ENCODE measurements at regions of chr7 and their contacts with region 1.

Region 1: GRCh38 chr7:66557608-66558143 is 71.0 kb upstream of the KCTD7 start:
- DNase-seq: peak; percentile 60 to 73 (median 64)
- H3K4me3 ChIP-seq: no peak overlapping the region
- H3K4me3 Mint-ChIP-seq: no peak overlapping the region
- H3K27ac ChIP-seq: no peak overlapping the region
- H3K27ac Mint-ChIP-seq: peak overlapping the region in 3 of 7 donors; percentile 30 to 78 (median 57)
- H3K4me1 ChIP-seq: no peaks in the 10 kb centered on the region
- H3K4me1 Mint-ChIP-seq: peaks cover 5 to 18% (median 7%) of the 10 kb centered on the region in 4 donors
- H3K27me3 ChIP-seq: no peaks in the 10 kb centered on the region
- H3K27me3 Mint-ChIP-seq: no peaks in the 10 kb centered on the region

Region 2: DNA sequence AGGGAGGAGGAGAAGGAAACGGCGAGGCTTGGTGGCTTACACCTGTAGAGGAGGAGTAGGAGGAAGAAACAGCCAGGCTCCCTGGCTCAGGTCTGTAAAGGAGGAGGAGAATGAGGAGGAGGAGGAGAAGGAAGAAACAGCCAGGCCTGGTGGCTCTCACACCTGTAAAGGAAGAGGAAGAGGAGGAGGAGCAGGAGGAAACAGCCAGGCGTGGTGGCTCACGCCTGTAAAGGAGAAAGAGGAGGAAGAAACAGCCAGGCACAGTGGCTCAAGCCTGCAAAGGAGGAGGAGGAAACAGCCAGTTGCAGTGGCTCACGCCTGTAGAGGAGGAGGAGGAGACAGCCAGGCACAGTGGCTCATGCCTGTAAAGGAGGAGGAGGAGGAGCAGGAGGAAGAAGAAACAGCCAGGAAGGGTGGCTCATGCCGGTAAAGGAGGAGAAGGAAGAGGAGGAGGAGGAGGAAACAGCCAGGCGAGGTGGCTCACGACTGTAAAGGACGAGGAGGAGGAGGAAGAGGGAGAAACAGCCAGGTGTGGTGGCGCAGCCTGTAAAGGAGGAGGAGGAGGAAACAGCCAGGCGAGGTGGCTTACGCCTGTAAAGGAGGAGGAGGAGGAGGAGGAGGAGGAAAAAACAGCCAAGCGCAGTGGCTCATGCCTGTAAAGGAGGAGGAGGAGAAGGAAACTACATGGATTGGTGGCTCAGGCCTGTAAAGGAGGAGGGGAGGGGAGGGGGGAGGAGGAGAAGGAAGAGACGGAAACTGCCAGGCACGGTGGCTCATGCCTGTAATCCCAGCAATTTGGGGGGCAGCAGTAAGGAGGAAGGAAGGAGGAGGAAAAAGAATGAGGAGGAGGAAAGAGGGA is 457.8 kb before region 1 on chr7:
- CTCF ChIA-PET with region 1: no interaction called
- POLR2A ChIA-PET with region 1: no interaction called
- intact Hi-C with region 1: no loop called
- DNase-seq: peak in 4 of 5 donors; percentile 19 to 31 (median 28)
- H3K4me3 ChIP-seq: peak overlapping the region; percentile 18 to 78
- H3K4me3 Mint-ChIP-seq: peak overlapping the region; percentile 85 to 95 (median 90)
- H3K27ac ChIP-seq: peak overlapping the region; percentile 50
- H3K27ac Mint-ChIP-seq: peak overlapping the region; percentile 78 to 96 (median 92)
- H3K4me1 ChIP-seq: peaks cover 7% of the 10 kb centered on the region
- H3K4me1 Mint-ChIP-seq: peaks cover 7 to 12% (median 9%) of the 10 kb centered on the region in 4 donors
- H3K27me3 ChIP-seq: no peaks in the 10 kb centered on the region
- H3K27me3 Mint-ChIP-seq: no peaks in the 10 kb centered on the region

Region 3: DNA sequence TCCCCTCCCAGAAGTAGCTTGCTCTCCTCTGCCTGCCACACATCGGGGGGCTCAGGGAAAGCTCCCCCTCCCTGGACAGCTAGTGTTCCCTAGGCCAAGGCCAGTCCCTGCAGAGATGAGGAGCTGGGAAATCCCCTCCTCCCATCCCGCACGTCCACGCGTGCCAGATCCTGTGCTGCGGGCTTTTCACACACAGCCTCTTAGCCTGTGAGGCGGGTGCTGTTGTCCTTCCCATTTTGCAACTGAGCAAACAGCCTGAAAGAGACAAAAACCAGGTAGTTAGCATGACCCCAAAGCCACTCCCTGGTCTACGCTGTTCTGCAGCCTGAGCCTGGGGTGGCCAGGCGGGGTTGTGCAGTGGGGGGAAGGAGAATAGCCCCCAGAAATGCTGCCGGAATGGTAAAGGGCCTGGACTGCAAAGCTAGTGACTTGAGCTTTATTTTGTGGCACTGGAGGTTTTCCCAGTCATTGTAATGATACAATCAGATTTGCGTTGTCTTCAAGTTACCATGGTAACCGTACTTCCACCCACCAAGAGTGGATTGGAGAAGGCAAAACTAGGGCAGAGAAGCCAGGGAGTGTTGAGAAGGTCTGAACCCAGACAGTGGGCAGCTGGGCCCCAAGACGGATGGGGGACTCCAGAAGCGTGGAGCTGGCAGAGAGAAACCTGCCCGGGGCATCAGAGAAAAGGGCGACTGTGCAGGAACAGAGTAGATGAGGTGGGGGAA is 27.6 kb before region 1 on chr7:
- CTCF ChIA-PET with region 1: no interaction called
- POLR2A ChIA-PET with region 1: no interaction called
- intact Hi-C with region 1: no loop called
- DNase-seq: no peak
- H3K4me3 ChIP-seq: no peak overlapping the region
- H3K4me3 Mint-ChIP-seq: no peak overlapping the region
- H3K27ac ChIP-seq: no peak overlapping the region
- H3K27ac Mint-ChIP-seq: peak overlapping the region in 4 of 7 donors; percentile 40 to 71 (median 54)
- H3K4me1 ChIP-seq: no peaks in the 10 kb centered on the region
- H3K4me1 Mint-ChIP-seq: peaks cover 0 to 4% (median 2%) of the 10 kb centered on the region in 4 donors
- H3K27me3 ChIP-seq: no peaks in the 10 kb centered on the region
- H3K27me3 Mint-ChIP-seq: no peaks in the 10 kb centered on the region

Region 4: DNA sequence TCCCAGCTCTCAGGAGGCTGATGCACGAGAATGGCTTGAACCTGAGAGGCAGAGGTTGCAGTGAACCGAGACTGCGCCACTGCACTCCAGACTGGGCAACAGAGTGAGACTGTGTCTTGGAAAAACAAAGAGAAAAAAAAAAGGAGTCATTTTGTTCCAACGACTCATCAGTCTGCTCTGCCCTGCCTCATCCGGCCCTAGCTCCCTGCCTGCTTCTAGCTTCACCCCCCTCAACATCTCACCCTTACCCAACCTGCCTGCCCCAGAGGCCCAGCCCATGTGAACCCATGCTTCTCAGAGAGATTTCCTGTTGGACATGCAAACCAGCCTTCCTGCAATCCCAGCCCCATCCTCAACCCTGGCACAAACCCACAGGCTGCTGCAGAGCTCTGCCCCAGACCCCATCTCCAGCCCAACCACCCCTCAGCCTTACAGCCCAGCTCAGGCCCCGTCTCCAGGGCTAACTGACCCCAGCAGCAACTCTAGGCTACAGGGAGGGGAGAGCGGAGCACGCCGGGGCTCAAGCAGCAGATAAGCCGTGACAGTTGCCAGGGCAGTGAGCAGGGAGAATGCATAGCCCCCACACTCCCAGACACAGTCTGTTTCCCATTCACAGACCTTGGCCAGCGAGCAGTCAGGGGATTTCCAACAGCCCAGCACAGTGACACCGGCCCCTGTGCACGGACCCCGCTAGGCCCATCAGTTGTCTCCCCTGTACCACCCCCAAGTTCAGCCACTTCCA is 15.0 kb before region 1 on chr7:
- CTCF ChIA-PET with region 1: interaction called, 12 read pairs
- POLR2A ChIA-PET with region 1: no interaction called
- intact Hi-C with region 1: no loop called
- DNase-seq: no peak
- H3K4me3 ChIP-seq: no peak overlapping the region
- H3K4me3 Mint-ChIP-seq: no peak overlapping the region
- H3K27ac ChIP-seq: no peak overlapping the region
- H3K27ac Mint-ChIP-seq: peak overlapping the region in 2 of 7 donors; percentile 70 to 81
- H3K4me1 ChIP-seq: no peaks in the 10 kb centered on the region
- H3K4me1 Mint-ChIP-seq: no peaks in the 10 kb centered on the region
- H3K27me3 ChIP-seq: no peaks in the 10 kb centered on the region
- H3K27me3 Mint-ChIP-seq: no peaks in the 10 kb centered on the region

Region 5: GRCh38 chr7:66779669-66780409 is 222.2 kb after region 1 on chr7:
- CTCF ChIA-PET with region 1: interaction called, 3 read pairs
- POLR2A ChIA-PET with region 1: no interaction called
- intact Hi-C with region 1: loop called (anchors 5 kb)
- DNase-seq: no peak
- H3K4me3 ChIP-seq: no peak overlapping the region
- H3K4me3 Mint-ChIP-seq: no peak overlapping the region
- H3K27ac ChIP-seq: no peak overlapping the region
- H3K27ac Mint-ChIP-seq: peak overlapping the region in 2 of 7 donors; percentile 50 to 77
- H3K4me1 ChIP-seq: no peaks in the 10 kb centered on the region
- H3K4me1 Mint-ChIP-seq: peaks cover 2 to 8% (median 5%) of the 10 kb centered on the region in 4 donors
- H3K27me3 ChIP-seq: no peaks in the 10 kb centered on the region
- H3K27me3 Mint-ChIP-seq: no peaks in the 10 kb centered on the region

Region 6: GRCh38 chr7:66810716-66811115 is 253.0 kb after region 1 on chr7:
- CTCF ChIA-PET with region 1: interaction called, 10 read pairs
- POLR2A ChIA-PET with region 1: no interaction called
- intact Hi-C with region 1: no loop called
- DNase-seq: no peak
- H3K4me3 ChIP-seq: no peak overlapping the region
- H3K4me3 Mint-ChIP-seq: no peak overlapping the region
- H3K27ac ChIP-seq: no peak overlapping the region
- H3K27ac Mint-ChIP-seq: no peak overlapping the region
- H3K4me1 ChIP-seq: no peaks in the 10 kb centered on the region
- H3K4me1 Mint-ChIP-seq: no peaks in the 10 kb centered on the region
- H3K27me3 ChIP-seq: no peaks in the 10 kb centered on the region
- H3K27me3 Mint-ChIP-seq: no peaks in the 10 kb centered on the region